Caco-2 (cell line): ENCODE measurements at regions of chr2 and their contacts with region 1.

Region 1: DNA sequence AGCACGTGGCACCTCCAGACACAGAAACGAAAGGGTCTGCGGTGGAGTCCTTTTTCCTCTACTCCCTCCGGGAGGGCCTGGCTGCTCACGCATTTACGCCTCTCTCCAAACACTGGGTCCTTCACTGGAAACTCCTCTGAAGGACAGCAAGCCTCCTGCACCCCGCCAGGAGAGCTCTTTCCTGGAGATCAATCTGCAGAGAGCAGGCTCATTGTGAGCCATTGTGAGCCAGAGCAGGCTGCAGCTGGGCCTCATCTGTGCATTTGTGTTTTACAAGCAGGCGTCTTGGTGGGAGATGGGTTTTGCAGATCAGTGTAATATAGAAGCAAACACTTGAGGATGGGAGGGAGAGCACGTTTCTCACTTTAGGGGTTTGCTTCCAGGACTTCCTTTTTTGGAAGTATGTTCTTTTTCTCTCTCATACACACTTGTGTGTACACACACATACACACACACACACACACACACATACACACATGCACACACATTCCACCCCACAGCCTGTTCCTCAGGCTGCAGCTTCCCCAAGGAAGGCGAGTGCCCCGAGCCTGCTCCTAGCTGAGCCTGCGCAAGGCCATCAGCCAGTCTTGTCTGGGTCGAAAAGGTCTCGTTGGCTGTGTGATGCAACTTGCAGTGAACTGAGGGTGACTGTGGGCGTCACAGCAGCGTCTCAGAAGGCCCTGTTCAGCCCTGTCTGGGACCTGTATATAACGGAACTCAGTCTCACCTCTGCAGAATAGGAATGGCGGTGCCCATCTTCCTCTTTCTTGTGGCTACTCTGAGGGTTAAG is 163.5 kb downstream of the GLI2 start:
- DNase-seq: no peak
- H3K4me3 ChIP-seq: no peak overlapping the region
- H3K4me3 Mint-ChIP-seq: no peak overlapping the region
- H3K27ac Mint-ChIP-seq: no peak overlapping the region
- H3K4me1 ChIP-seq: peaks cover 8% of the 10 kb centered on the region; the same call in 1 of the 2 replicates
- H3K4me1 Mint-ChIP-seq: peaks cover 8% of the 10 kb centered on the region
- H3K27me3 ChIP-seq: no peaks in the 10 kb centered on the region
- H3K27me3 Mint-ChIP-seq: no peaks in the 10 kb centered on the region
- CTCF ChIP-seq: no peak

Region 2: DNA sequence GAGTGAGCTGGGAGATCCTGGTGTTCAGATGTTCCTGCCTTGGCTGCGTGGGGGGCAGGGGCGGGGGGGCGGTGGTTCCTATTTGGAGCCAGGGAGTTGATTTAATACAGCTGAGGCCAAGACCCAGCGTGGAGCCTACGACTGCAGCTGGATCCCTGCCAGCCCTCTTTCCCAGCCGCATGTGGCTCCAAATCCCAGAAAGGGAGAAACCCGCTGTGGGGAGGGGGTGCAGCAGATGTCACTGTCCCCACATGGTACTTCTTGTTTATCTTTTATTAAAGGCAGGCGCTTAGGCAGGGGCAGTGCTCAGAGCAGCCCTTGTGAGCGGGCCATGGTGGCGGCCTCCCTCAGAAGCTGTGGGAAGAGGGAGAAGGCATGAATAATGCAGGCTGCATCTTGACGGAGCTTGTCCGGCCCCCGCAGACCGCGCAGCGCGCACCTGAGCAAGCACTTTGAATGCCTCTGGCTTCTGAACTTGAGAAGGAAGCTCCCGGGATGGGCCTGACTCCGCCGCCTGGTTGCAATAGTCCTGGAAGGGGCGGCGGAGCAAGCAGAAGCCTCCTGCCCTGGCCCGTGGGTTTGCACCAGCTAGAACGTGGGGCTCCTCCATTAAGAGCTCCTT is 51.3 kb before region 1 on chr2:
- CTCF ChIA-PET with region 1: no interaction called
- POLR2A ChIA-PET with region 1: no interaction called
- intact Hi-C with region 1: loop called (anchors 5 kb)
- DNase-seq: no peak
- H3K4me3 ChIP-seq: no peak overlapping the region
- H3K4me3 Mint-ChIP-seq: no peak overlapping the region
- H3K27ac Mint-ChIP-seq: no peak overlapping the region
- H3K4me1 ChIP-seq: no peaks in the 10 kb centered on the region
- H3K4me1 Mint-ChIP-seq: no peaks in the 10 kb centered on the region
- H3K27me3 ChIP-seq: no peaks in the 10 kb centered on the region
- H3K27me3 Mint-ChIP-seq: no peaks in the 10 kb centered on the region
- CTCF ChIP-seq: no peak